Activated CD4-positive, alpha-beta memory T cell treated with anti-CD3 and anti-CD28 coated beads for 36 hours (primary cell): ENCODE measurements at regions of chr12 and their contacts with region 1.

Region 1: GRCh38 chr12:29380536-29381523 is at the start of gene ERGIC2:
- DNase-seq: peak; percentile 93
- H3K4me3 Mint-ChIP-seq: peak within 1 kb of the TSS; percentile 80
- H3K27ac Mint-ChIP-seq: peak within 1 kb of the TSS; percentile 89
- H3K4me1 Mint-ChIP-seq: peaks cover 45% of the 10 kb centered on the region
- H3K27me3 Mint-ChIP-seq: no peaks in the 10 kb centered on the region
- total RNA-seq, gene ERGIC2: 103 to 120 TPM

Region 2: DNA sequence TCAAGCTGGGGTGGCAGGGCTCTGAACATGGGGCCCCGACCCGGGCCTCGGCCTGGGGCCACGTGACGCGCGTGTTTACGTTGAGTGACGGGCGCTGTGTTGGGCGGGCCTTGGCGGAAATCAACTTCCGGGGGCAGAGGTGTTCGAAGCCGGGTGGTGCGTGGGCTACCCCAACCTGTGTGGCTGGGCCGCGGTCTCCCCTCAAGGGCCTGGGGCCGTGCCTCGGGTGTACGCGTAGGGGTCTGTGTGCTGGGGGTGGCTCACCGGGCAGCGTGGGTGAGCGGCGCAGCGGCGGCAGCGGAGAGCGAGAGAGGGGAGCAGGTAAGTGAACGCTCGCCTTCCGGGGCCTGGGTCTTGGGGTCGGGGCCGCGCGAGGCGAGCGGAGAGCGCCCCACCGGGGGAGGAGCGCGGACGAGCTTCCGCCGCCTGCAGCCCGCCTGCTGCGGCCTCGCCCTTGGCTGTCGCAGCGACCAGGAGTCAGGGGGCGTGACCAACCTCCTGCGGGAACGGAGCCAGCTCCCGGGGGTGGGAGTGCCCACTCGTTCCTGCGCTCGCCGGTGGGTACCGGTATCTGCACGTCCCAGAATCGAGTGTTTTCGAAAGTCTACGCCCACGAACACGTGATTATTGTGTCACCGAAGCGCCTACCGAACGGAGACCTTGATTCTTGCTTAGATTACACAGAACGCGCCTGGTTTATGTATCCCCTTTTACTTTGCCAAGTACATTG is 1190.3 kb before region 1 on chr12 and contains the start of gene CCDC91:
- CTCF ChIA-PET with region 1: no interaction called
- POLR2A ChIA-PET with region 1: no interaction called
- intact Hi-C with region 1: loop called (anchors 1 kb)
- DNase-seq: peak; percentile 92
- H3K4me3 Mint-ChIP-seq: peak within 1 kb of the TSS; percentile 98
- H3K27ac Mint-ChIP-seq: peak within 1 kb of the TSS; percentile 99
- H3K4me1 Mint-ChIP-seq: peaks cover 57% of the 10 kb centered on the region
- H3K27me3 Mint-ChIP-seq: no peaks in the 10 kb centered on the region
- total RNA-seq, gene CCDC91: 16.5 to 19.7 TPM

Region 3: GRCh38 chr12:29148911-29149690 is 231.7 kb before region 1 on chr12 and contains the start of gene FAR2:
- CTCF ChIA-PET with region 1: no interaction called
- POLR2A ChIA-PET with region 1: no interaction called
- intact Hi-C with region 1: loop called (anchors 5 kb)
- DNase-seq: peak; percentile 61
- H3K4me3 Mint-ChIP-seq: peak within 1 kb of the TSS; percentile 92
- H3K27ac Mint-ChIP-seq: peak within 1 kb of the TSS; percentile 76
- H3K4me1 Mint-ChIP-seq: peaks cover 19% of the 10 kb centered on the region
- H3K27me3 Mint-ChIP-seq: peaks cover 1% of the 10 kb centered on the region
- total RNA-seq, gene FAR2: 9.2 to 9.9 TPM

Region 4: DNA sequence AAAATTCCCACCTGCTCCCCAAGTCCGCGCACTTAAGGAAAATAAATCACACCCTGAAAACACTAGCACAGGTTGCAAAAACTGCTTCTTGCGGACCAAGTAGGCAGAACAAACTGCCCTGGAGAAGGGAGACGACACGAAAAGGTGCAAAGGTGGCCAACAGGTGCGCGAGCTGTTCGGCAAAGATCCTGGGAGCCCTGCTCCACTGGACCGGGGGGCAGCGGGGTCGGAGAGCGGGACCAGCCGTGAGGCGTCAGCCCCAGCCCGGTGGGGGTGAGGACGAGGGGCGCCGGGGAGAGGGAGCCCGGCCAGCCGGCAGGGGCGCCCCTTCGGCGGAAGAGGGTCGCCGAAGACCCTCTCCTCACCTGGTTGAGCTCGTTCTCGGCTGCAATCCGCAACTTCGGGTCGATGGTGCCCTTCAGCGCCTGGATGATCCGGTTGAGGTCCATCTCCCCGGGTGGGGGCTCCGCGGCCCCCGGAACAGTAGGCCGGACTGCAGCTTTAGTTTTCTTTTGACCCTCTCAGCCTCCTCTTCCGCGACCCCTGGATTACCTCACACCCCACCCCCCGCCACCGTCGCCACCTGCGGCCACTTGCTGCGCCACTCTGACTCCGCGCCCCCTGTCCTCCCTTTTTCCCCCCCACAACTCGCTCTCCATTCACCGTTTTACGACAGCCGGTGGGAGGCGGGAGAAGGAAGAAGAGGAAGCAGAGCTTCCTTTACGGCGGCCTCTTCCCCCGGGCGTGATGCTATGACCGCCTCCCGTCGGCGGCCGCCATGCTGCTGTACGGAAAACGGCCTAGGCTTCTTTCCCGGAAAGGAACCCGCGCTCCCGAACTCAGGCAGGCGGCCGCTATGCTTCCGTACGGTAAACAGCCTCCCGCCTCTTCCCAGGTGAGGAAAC is 1314.6 kb after region 1 on chr12 and contains the start of gene IPO8:
- CTCF ChIA-PET with region 1: no interaction called
- POLR2A ChIA-PET with region 1: no interaction called
- intact Hi-C with region 1: loop called (anchors 5 kb)
- DNase-seq: peak; percentile 90
- H3K4me3 Mint-ChIP-seq: peak within 1 kb of the TSS; percentile 88
- H3K27ac Mint-ChIP-seq: peak within 1 kb of the TSS; percentile 84
- H3K4me1 Mint-ChIP-seq: peaks cover 32% of the 10 kb centered on the region
- H3K27me3 Mint-ChIP-seq: no peaks in the 10 kb centered on the region
- total RNA-seq, gene IPO8: 39.2 to 41.3 TPM

Region 5: DNA sequence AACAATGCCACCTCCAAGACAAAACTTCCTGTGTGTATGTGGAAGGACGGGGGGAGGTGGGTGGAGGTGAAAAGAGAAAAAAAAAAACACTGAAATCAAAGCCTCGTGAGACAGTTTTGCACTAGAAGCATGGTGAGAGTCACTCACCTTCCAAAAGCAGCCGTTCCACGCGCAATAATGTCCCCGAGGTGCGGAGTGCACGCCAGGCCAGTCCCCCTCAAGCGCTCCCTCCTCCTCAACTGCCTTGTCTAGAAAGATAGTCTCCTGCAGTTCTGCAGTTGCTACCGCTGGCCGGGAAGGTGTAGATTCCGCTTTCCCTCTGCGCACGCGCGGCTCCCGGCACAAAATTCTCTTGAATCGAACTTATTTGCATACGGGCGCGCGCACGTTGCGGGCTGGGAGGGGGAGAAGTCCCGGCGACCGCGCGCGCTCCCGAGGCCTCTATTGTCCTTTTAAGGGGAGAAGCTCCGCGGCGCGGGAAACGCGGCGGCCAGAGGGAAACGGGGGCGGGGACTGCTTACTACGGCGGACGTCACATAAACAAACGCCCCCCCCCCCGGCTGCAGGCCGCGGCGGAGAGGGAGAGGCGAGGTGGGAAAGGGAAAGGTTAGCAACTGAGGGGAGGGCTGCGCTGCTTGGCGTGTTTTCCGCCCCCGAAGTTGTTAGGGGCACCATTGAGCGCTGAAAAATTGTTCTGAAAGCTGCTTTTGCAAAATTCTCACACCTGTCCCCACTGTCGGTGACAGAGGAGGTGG is 1945.2 kb after region 1 on chr12 and contains the start of gene SINHCAF:
- CTCF ChIA-PET with region 1: no interaction called
- POLR2A ChIA-PET with region 1: no interaction called
- intact Hi-C with region 1: loop called (anchors 10 kb)
- DNase-seq: peak; percentile 99
- H3K4me3 Mint-ChIP-seq: peak within 1 kb of the TSS; percentile 100
- H3K27ac Mint-ChIP-seq: peak within 1 kb of the TSS; percentile 99
- H3K4me1 Mint-ChIP-seq: peaks cover 24% of the 10 kb centered on the region
- H3K27me3 Mint-ChIP-seq: peaks cover 2% of the 10 kb centered on the region
- total RNA-seq, gene SINHCAF: 181 to 186 TPM